Breast epithelium (tissue), 4 donors: ENCODE measurements at regions of chrX and their contacts with region 1.

Region 1: DNA sequence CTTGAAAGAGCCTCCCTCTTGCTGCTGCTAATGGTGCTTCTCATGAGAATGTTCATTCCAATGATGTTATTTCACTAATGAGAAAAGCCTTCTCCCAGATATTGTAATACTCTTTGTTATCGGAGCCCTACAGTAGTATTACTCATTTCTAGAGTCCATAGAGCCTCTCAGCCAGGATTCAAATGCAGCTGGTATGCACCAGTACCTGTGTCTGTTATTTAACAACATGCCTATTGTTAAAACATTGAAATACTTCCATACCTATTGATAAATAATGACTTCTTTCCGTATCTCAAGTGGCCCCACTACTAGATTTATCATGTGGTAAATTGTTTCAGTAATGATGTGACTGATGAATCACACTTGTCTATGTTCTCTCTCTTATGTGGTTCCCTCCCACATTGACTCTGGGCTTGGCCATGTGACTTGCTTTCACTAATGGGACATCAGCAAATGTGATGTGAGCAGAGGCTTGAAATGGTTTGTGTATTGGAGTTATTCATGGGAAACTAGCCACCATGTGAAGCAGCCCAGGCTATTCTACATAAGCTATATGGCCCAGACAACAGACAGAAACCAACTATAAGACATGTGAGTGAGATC is 207.6 kb downstream of the THOC2 start:
- DNase-seq: no peak
- H3K4me3 ChIP-seq: no peak overlapping the region
- H3K27ac ChIP-seq: no peak overlapping the region
- H3K4me1 ChIP-seq: no peaks in the 10 kb centered on the region
- H3K27me3 ChIP-seq: no peaks in the 10 kb centered on the region
- CTCF ChIP-seq: no peak
- POLR2A ChIP-seq: no peak

Region 2: DNA sequence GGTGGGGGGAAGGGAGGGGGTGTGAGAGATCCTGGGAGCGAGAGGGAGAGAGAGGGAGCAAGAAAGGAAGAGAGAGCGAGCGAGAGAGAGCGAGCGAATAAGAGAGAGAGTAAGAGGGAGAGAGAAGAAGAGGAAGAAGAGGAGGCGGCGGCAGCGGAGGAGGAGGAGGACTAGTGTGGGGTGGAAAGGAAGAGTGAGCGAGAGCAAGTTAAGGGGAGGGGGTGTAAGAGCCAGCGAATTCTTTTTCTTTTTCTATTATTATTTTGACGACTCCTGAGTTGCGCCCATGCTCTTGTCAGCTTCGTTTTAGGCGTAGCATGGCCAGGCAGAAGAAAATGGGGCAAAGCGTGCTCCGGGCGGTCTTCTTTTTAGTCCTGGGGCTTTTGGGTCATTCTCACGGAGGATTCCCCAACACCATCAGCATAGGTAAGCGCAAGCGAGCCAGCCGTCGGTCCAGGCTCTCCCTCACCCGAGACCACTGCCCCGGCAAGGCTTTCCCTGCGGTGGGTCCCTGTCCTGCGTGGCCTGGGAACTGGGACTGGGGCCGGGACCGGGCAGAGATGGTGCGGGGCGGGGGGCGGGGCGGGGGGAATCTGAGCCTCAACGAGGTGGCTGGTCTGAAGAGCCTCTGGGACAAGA is 340.9 kb before region 1 on chrX and contains the start of gene GRIA3:
- intact Hi-C with region 1: no loop called
- DNase-seq: no peak
- H3K4me3 ChIP-seq: peak within 1 kb of the TSS; percentile 42 to 65 (median 48)
- H3K27ac ChIP-seq: no peak within 1 kb of the TSS
- H3K4me1 ChIP-seq: no peaks in the 10 kb centered on the region
- H3K27me3 ChIP-seq: peaks cover 0 to 27% of the 10 kb centered on the region in 2 donors
- CTCF ChIP-seq: no peak
- POLR2A ChIP-seq: no peak
- total RNA-seq, gene GRIA3: 0.98 to 2.6 (median 1.9) TPM

Region 3: DNA sequence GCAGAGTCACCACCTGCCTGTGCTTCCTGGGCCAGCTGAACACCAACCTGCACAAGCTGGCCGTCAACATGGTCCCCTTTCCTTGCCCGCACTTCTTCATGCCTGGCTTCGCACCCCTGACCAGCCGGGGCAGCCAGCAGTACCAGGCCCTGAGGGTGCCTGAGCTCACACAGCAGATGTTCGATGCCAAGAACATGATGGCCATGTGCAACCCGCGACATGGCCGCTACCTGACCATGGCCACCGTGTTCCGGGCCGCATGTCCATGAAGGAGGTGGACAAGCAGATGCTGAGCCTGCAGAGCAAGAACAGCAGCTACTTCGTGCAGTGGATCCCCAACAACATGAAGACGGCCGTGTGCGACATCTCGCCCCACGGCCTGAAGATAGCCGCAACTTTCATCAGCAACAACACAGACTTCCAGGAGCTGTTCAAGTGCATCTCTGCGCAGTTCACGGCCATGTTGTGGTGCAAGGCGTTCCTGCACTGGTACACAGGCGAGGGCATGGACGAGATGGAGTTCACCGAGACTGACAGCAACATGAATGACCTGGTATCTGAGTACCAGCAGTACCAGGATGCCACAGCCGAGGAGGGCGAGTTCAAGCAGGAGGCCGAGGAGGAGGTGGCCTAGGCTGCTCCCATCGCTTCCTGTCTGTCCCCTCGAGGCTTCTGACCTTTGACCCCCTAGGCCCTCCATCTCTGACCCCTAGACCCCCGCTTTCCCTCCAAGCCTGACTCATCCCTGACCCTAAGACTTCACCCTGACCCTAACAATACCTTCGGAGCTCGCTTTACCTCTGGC is 37.3 kb after region 1 on chrX:
- intact Hi-C with region 1: loop called (anchors 2 kb)
- DNase-seq: no peak
- H3K4me3 ChIP-seq: no peak overlapping the region
- H3K27ac ChIP-seq: no peak overlapping the region
- H3K4me1 ChIP-seq: no peaks in the 10 kb centered on the region
- H3K27me3 ChIP-seq: no peaks in the 10 kb centered on the region
- CTCF ChIP-seq: no peak
- POLR2A ChIP-seq: no peak